ENCODE measurements at regions of chrX and their contacts with region 1.

Region 1: GRCh38 chrX:125977851-125978250 is 188.2 kb downstream of the DCAF12L2 start:
- DNase-seq: no peak

Region 2: GRCh38 chrX:125420809-125421208 is 557.0 kb before region 1 on chrX:
- intact Hi-C with region 1: loop called in 1 of 2 experiments (anchors 5 kb)
- DNase-seq: no peak

Region 3: GRCh38 chrX:125998432-125998831 is 20.6 kb after region 1 on chrX:
- intact Hi-C with region 1: no loop called
- DNase-seq: no peak

Measured in posterior vena cava (tissue), 2 donors.